Mammary epithelial cell (primary cell): ENCODE measurements at regions of chr5 and their contacts with region 1.

Region 1: GRCh38 chr5:34898258-34898895 is 16.9 kb downstream of the RAD1 start:
- DNase-seq: peak; percentile 43
- H3K4me3 ChIP-seq: no peak overlapping the region
- H3K27ac ChIP-seq: no peak overlapping the region
- H3K4me1 ChIP-seq: no peaks in the 10 kb centered on the region
- H3K27me3 ChIP-seq: no peaks in the 10 kb centered on the region
- CTCF ChIP-seq: peak; percentile 87 to 90

Region 2: DNA sequence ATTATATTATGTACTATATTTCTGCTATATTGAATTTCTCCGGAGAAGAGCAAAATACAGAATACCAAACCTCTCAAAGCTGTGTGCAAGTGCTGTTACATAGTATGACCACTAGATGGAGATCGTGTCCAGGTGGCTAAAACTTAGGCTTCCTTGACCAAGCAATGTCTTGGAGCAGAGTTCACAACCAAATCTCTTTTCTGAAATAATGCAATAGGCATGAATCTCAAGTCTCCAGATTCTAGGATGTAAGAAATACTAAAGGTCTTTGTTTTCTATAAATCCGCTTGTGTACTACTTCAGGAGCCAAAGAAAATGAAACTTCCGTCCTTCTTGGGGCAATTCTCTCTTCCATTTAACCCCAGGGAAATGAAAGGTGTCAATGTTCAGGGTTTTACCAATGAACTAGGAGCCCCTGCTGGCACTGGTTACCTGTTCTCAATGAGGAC is 423.8 kb before region 1 on chr5:
- CTCF ChIA-PET with region 1: no interaction called
- dilution Hi-C with region 1: no loop called
- in situ Hi-C with region 1: no loop called
- intact Hi-C with region 1: loop called (anchors 1 kb)
- DNase-seq: peak; percentile 43
- H3K4me3 ChIP-seq: no peak overlapping the region
- H3K27ac ChIP-seq: no peak overlapping the region
- H3K4me1 ChIP-seq: no peaks in the 10 kb centered on the region
- H3K27me3 ChIP-seq: no peaks in the 10 kb centered on the region
- CTCF ChIP-seq: peak; percentile 96 to 98

Region 3: DNA sequence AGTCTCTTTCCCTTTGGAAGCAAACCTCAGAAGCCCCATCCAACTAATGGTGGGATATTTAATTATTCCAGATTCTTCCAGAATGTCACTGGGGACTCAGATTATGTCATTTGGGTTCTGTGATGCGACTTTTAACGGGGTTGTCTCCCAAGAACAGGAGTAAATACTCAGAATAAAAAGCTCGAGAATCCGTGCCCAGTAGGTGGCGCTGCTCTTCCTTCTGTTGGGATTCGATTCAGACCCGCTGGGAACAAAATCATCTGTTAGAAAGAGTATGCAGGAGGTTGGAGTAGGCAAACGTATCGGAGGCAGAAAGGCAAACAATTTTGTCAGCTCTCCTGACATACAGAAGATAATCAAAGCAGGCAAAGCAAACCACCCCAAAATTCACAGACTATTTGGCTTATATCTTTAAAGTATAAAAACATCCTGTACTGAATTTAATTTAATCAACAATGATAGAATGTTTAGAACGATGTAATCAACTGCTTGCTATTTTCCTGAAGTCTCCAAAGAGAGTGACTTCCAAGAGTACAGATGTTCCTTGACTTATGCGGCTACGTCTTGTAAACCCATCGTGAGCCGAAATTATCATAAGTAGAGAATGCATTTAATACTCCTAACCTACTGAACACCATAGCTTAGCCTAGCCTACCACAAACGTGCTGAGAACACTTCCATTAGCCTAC is 412.1 kb before region 1 on chr5:
- CTCF ChIA-PET with region 1: no interaction called
- dilution Hi-C with region 1: no loop called
- in situ Hi-C with region 1: loop called in 1 of 2 experiments (anchors 5 kb)
- intact Hi-C with region 1: loop called (anchors 1 kb)
- DNase-seq: peak; percentile 68
- H3K4me3 ChIP-seq: no peak overlapping the region
- H3K27ac ChIP-seq: no peak overlapping the region
- H3K4me1 ChIP-seq: peaks cover 23% of the 10 kb centered on the region
- H3K27me3 ChIP-seq: no peaks in the 10 kb centered on the region
- CTCF ChIP-seq: peak; percentile 85 to 88

Region 4: GRCh38 chr5:34522599-34523386 is 375.6 kb before region 1 on chr5:
- CTCF ChIA-PET with region 1: no interaction called
- dilution Hi-C with region 1: no loop called
- in situ Hi-C with region 1: no loop called
- intact Hi-C with region 1: loop called (anchors 1 kb)
- DNase-seq: peak; percentile 73
- H3K4me3 ChIP-seq: no peak overlapping the region
- H3K27ac ChIP-seq: no peak overlapping the region
- H3K4me1 ChIP-seq: peaks cover 19% of the 10 kb centered on the region
- H3K27me3 ChIP-seq: no peaks in the 10 kb centered on the region
- CTCF ChIP-seq: peak; percentile 71 to 74

Region 5: DNA sequence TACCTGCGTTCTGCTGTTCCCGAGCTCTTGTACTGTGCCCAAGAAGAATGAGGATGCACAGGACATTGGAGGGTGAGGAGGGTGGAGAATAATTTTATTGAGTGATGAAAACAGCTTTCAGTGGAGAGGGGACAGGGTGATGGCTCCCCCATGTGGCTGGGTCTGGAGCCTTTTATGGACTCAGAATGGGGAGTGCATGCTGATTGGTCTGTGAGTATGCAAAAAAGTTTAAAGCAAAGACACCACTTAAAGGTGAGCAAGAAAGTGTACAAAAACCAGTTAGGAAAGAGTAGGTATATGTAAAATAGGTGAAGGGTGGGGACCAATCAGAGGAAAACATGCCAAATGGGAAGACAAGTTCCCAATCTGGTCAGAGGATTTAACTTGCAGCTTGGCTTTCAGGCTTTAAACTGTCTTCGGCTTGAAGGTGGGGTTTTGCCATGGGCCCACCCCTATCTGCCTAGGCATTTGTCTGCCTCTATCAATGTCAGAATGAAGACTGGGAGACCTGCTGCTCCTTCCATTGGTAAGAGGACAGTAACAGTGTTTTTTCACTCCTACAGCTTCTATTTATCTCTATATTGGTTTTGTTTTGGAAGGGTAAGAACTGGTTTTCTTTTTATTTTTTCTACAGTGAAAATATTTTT is 360.2 kb before region 1 on chr5:
- CTCF ChIA-PET with region 1: no interaction called
- dilution Hi-C with region 1: no loop called
- in situ Hi-C with region 1: no loop called
- intact Hi-C with region 1: loop called (anchors 5 kb)
- DNase-seq: peak; percentile 45
- H3K4me3 ChIP-seq: no peak overlapping the region
- H3K27ac ChIP-seq: no peak overlapping the region
- H3K4me1 ChIP-seq: peaks cover 19% of the 10 kb centered on the region
- H3K27me3 ChIP-seq: no peaks in the 10 kb centered on the region
- CTCF ChIP-seq: peak; percentile 28 to 61

Region 6: DNA sequence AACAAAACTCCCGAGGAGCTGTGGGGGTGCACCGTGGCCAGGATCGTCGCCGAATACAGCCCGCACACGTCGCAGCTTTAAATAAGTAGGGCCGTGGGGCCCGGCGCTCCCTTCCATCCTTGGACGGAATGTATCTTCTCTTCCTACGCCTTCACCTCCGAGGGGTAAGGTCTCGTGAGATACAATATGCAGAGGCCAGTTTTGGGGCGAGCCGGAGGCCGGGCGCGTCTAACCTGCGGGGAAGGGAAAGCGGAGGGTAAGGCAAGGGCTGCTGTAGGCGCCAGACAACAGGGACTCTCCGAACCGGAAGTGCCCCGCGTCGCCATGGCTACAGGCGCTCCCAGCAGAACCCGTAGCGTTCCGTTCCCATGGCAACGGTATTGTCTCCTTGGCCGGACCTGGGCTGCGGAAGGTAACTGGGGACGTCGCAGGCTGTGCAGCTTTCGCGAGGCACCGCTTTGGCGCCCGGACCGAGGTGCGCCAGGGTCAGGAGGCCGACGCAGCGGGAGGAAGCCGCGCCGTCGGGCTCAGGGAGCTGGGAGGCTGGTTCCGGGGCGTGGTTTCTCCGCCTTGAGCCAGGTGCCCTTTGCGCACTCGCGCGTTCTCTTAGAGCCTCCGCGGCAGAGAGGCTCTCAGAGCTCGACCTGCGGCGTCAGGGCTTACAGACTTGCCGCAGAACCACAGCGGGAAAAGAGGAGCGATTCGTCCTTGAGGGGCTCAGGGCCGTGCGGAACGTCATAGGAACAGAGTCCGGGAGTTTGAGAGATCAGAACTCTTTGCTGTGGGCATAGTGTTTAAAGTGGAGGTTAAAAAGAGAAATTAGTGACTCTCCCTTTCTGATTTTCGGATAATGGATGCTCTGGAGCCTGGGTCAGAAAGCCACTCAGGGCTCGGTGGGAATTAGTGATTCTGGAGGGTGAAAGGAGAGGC is 59.3 kb before region 1 on chr5 and contains the start of gene TTC23L:
- CTCF ChIA-PET with region 1: no interaction called
- dilution Hi-C with region 1: no loop called
- in situ Hi-C with region 1: no loop called
- intact Hi-C with region 1: loop called (anchors 1 kb)
- DNase-seq: peak; percentile 91
- H3K4me3 ChIP-seq: peak within 1 kb of the TSS; percentile 42 to 62 (median 57)
- H3K27ac ChIP-seq: peak within 1 kb of the TSS; percentile 46
- H3K4me1 ChIP-seq: no peaks in the 10 kb centered on the region
- H3K27me3 ChIP-seq: no peaks in the 10 kb centered on the region
- CTCF ChIP-seq: no peak
- total RNA-seq, gene TTC23L: 0.17 TPM in 1 of 2 donors, not detected in the other

Region 7: GRCh38 chr5:35089334-35090314 is 191.2 kb after region 1 on chr5:
- CTCF ChIA-PET with region 1: no interaction called
- dilution Hi-C with region 1: no loop called
- in situ Hi-C with region 1: no loop called
- intact Hi-C with region 1: no loop called
- DNase-seq: peak; percentile 32
- H3K4me3 ChIP-seq: no peak overlapping the region
- H3K27ac ChIP-seq: no peak overlapping the region
- H3K4me1 ChIP-seq: no peaks in the 10 kb centered on the region
- H3K27me3 ChIP-seq: no peaks in the 10 kb centered on the region
- CTCF ChIP-seq: peak; percentile 56 to 74